Activated B cell treated with CpG ODN at 0.5 μM for 24 hours (primary cell): ENCODE measurements at regions of chr10 and their contacts with region 1.

Region 1: DNA sequence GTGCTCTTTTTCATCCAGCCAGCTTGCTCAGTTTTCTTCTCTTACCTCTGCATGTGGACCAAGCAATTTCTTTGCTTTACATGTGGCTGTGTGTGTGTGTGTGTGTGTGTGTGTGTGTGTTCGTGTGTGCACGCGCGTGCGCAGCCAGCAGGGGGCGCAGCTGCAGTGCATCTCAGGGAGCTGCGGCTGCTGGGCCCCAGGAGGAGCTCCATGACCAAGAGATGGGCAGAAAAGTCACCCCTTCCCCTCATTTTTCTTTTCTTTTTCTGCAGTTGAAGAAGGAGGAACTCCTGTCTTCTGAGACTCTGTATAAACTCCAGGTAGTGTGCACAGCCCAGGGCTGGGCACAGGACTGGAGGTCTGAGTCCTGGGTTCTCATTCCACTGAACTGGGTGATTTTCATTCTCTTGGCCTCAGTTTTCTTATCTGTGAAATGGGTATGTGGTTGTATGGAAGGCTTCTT is 41.8 kb downstream of the BLNK start:
- DNase-seq: peak; percentile 71
- ATAC-seq: peak; percentile 63
- H3K4me3 Mint-ChIP-seq: peak overlapping the region; percentile 36
- H3K27ac Mint-ChIP-seq: peak overlapping the region; percentile 76
- H3K4me1 Mint-ChIP-seq: peaks cover 50% of the 10 kb centered on the region
- H3K27me3 Mint-ChIP-seq: no peaks in the 10 kb centered on the region
- CTCF ChIP-seq: no peak

Region 2: GRCh38 chr10:96017191-96017687 is 212.4 kb before region 1 on chr10:
- CTCF ChIA-PET with region 1: interaction called, 19 read pairs
- POLR2A ChIA-PET with region 1: no interaction called
- intact Hi-C with region 1: loop called (anchors 1 kb)
- DNase-seq: no peak
- ATAC-seq: peak; percentile 74
- H3K4me3 Mint-ChIP-seq: no peak overlapping the region
- H3K27ac Mint-ChIP-seq: no peak overlapping the region
- H3K4me1 Mint-ChIP-seq: no peaks in the 10 kb centered on the region
- H3K27me3 Mint-ChIP-seq: no peaks in the 10 kb centered on the region
- CTCF ChIP-seq: peak; percentile 52

Region 3: GRCh38 chr10:96250349-96250748 is 20.8 kb after region 1 on chr10:
- CTCF ChIA-PET with region 1: interaction called, 29 read pairs
- POLR2A ChIA-PET with region 1: interaction called, 6 read pairs
- intact Hi-C with region 1: no loop called
- DNase-seq: no peak
- ATAC-seq: no peak
- H3K4me3 Mint-ChIP-seq: no peak overlapping the region
- H3K27ac Mint-ChIP-seq: peak overlapping the region; percentile 64
- H3K4me1 Mint-ChIP-seq: peaks cover 73% of the 10 kb centered on the region
- H3K27me3 Mint-ChIP-seq: no peaks in the 10 kb centered on the region
- CTCF ChIP-seq: no peak

Region 4: GRCh38 chr10:96263669-96264068 is 34.1 kb after region 1 on chr10:
- CTCF ChIA-PET with region 1: interaction called, 90 read pairs
- POLR2A ChIA-PET with region 1: interaction called, 39 read pairs
- intact Hi-C with region 1: no loop called
- DNase-seq: no peak
- ATAC-seq: no peak
- H3K4me3 Mint-ChIP-seq: peak overlapping the region; percentile 50
- H3K27ac Mint-ChIP-seq: peak overlapping the region; percentile 77
- H3K4me1 Mint-ChIP-seq: peaks cover 96% of the 10 kb centered on the region
- H3K27me3 Mint-ChIP-seq: no peaks in the 10 kb centered on the region
- CTCF ChIP-seq: no peak

Region 5: GRCh38 chr10:96287392-96288105 is 58.0 kb after region 1 on chr10:
- CTCF ChIA-PET with region 1: interaction called, 612 read pairs
- POLR2A ChIA-PET with region 1: interaction called, 169 read pairs
- intact Hi-C with region 1: no loop called
- DNase-seq: no peak
- ATAC-seq: peak; percentile 72
- H3K4me3 Mint-ChIP-seq: peak overlapping the region; percentile 75
- H3K27ac Mint-ChIP-seq: peak overlapping the region; percentile 96
- H3K4me1 Mint-ChIP-seq: peaks cover 75% of the 10 kb centered on the region
- H3K27me3 Mint-ChIP-seq: no peaks in the 10 kb centered on the region
- CTCF ChIP-seq: no peak

Region 6: DNA sequence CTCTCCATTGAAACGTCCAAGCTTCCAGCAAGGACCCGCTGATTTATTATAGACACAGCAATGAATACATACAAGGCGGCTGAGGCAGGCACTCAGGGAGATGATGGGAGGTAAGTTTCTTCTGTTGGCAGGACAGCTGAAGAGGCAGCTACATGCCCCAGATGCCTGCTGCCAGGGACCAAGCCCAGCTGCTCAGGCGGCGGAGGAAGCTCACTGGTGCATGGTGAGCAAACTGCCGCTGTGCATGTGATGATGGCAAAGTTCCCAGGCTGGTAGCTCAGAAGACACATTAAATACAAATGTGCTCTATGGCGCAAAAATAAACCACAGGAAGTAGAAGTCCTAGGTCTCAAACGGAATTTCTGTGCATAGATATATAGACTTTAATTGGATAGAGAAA is 76.9 kb after region 1 on chr10:
- CTCF ChIA-PET with region 1: interaction called, 30 read pairs
- POLR2A ChIA-PET with region 1: interaction called, 3 read pairs
- intact Hi-C with region 1: no loop called
- DNase-seq: peak; percentile 32
- ATAC-seq: peak; percentile 90
- H3K4me3 Mint-ChIP-seq: peak overlapping the region; percentile 24
- H3K27ac Mint-ChIP-seq: no peak overlapping the region
- H3K4me1 Mint-ChIP-seq: peaks cover 27% of the 10 kb centered on the region
- H3K27me3 Mint-ChIP-seq: peaks cover 26% of the 10 kb centered on the region
- CTCF ChIP-seq: no peak

Region 7: DNA sequence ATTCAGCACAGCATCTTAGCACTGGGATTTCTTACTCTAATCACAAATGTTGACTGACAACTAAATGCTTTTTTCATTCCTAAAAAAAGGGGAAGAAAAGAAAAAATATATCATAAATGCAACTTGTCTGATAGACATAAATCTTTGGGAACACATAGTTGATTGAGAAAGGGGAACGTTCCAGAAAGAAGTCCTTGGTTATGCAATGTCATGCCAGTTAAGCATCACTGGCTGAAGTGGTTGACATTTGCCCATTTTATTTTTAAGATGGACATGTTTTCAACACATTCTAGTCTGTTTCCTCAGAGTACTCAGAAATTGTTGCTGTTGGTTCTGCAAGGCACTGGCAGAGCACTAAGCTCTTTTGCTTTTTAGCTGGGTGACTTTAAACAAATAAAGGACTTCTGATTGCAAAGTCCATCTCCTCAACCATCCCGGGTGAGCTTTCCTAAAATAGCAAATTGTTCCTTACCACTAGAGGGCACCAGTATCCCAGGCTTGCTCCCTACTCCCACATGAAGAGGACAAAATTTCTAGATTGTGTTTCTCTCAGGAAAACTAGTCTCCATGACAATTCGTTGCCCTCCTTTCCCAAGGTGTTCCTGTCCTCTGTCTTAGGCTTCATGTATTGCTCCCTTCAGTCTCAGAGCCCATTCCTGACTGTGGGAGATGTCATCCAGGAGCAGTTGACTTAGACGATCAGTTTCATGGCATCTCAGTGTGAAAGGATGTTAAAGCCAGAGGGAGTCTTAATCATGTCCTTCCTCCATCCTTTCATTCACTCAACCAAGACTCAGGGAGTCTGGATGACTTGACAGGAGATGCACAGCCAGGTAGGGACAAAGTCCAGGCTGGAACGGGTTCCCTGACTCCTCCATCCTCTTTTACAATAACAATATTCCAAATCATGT is 105.3 kb after region 1 on chr10:
- CTCF ChIA-PET with region 1: interaction called, 22 read pairs
- POLR2A ChIA-PET with region 1: interaction called, 3 read pairs
- intact Hi-C with region 1: loop called (anchors 1 kb)
- DNase-seq: no peak
- ATAC-seq: no peak
- H3K4me3 Mint-ChIP-seq: no peak overlapping the region
- H3K27ac Mint-ChIP-seq: no peak overlapping the region
- H3K4me1 Mint-ChIP-seq: peaks cover 3% of the 10 kb centered on the region
- H3K27me3 Mint-ChIP-seq: peaks cover 6% of the 10 kb centered on the region
- CTCF ChIP-seq: no peak